CD4-positive, alpha-beta memory T cell (primary cell): ENCODE measurements at regions of chr20 and their contacts with region 1.

Region 1: GRCh38 chr20:33862709-33863403 is 51.7 kb downstream of the CHMP4B start:
- DNase-seq: peak in 3 of 5 donors; percentile 24 to 39 (median 28)
- H3K4me3 ChIP-seq: no peak overlapping the region
- H3K4me3 Mint-ChIP-seq: peak overlapping the region in 1 of 8 donors; percentile 27
- H3K27ac ChIP-seq: no peak overlapping the region
- H3K27ac Mint-ChIP-seq: no peak overlapping the region
- H3K4me1 ChIP-seq: peaks cover 30% of the 10 kb centered on the region
- H3K4me1 Mint-ChIP-seq: peaks cover 15 to 26% (median 21%) of the 10 kb centered on the region in 4 donors
- H3K27me3 ChIP-seq: no peaks in the 10 kb centered on the region
- H3K27me3 Mint-ChIP-seq: no peaks in the 10 kb centered on the region

Region 2: DNA sequence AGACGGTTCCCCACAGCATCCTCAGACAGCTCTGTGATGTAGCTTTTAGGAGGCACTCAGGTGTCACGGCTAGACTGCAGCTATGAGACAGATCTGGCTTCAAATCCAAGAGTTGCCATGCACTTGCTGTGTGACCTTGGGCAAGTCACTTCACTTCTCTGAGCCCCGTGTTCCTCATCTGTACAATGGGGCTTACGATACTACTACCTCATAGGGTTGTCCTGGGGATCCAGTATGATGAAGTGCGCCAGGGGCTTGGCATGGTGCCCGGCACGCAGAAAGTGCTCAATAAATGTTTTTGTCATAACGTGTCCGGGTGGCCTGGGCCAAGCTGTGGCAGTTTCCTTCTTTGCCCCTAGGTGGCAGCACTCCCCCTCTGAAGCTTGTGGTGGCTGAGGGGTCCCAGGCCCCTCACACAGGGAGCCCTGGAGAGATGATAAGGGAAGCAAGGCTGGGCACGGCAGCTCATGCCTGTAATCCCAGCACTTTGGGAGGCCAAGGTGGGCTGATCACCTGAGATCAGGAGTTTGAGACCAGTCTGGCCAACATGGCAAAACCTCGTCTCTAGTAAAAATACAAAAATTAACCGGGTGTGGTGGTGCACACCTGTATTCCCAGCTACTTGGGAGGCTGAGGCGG is 70.8 kb before region 1 on chr20:
- CTCF ChIA-PET with region 1: interaction called, 13 read pairs
- POLR2A ChIA-PET with region 1: no interaction called
- intact Hi-C with region 1: no loop called
- DNase-seq: peak; percentile 20 to 48 (median 32)
- H3K4me3 ChIP-seq: no peak overlapping the region
- H3K4me3 Mint-ChIP-seq: no peak overlapping the region
- H3K27ac ChIP-seq: no peak overlapping the region
- H3K27ac Mint-ChIP-seq: no peak overlapping the region
- H3K4me1 ChIP-seq: peaks cover 9% of the 10 kb centered on the region
- H3K4me1 Mint-ChIP-seq: peaks cover 6 to 14% (median 10%) of the 10 kb centered on the region in 4 donors
- H3K27me3 ChIP-seq: no peaks in the 10 kb centered on the region
- H3K27me3 Mint-ChIP-seq: no peaks in the 10 kb centered on the region

Region 3: GRCh38 chr20:33839566-33839965 is 23.3 kb before region 1 on chr20:
- CTCF ChIA-PET with region 1: interaction called, 4 read pairs
- POLR2A ChIA-PET with region 1: interaction called, 10 read pairs
- intact Hi-C with region 1: no loop called
- DNase-seq: no peak
- H3K4me3 ChIP-seq: no peak overlapping the region
- H3K4me3 Mint-ChIP-seq: no peak overlapping the region
- H3K27ac ChIP-seq: no peak overlapping the region
- H3K27ac Mint-ChIP-seq: peak overlapping the region in 1 of 7 donors; percentile 71
- H3K4me1 ChIP-seq: peaks cover 91% of the 10 kb centered on the region
- H3K4me1 Mint-ChIP-seq: peaks cover 72 to 95% (median 86%) of the 10 kb centered on the region in 4 donors
- H3K27me3 ChIP-seq: no peaks in the 10 kb centered on the region
- H3K27me3 Mint-ChIP-seq: no peaks in the 10 kb centered on the region

Region 4: DNA sequence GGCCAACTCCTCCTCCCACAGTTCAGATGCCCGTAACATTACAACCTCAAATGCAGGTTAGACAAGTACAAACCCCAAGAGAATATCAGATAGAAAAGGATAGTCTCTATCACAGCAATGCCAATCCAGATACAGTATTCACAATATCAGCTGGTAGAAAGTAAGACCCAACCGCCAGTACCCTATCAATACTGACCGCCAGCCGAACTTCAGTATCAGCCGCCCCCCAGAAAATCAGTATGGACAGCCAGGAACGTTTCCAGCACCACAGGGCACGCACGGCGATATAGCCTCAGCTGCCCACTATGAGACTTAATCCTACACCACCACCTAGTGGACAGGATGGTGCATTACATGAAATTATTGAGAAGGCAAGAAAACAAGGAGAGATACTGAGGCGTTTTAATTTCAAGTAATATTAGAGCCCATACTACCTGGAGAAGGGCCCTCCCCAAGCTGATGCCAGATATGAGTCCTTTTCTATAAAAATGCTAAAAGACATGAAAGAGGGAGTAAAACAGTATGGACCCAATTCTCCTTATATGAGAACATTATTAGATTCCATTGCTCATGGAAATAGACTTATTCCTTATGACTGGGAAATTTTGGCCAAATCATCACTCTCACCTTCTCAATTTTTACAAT is 266.8 kb after region 1 on chr20:
- CTCF ChIA-PET with region 1: interaction called, 6 read pairs
- POLR2A ChIA-PET with region 1: no interaction called
- intact Hi-C with region 1: loop called (anchors 1 kb)
- DNase-seq: peak; percentile 65 to 74 (median 71)
- H3K4me3 ChIP-seq: no peak overlapping the region
- H3K4me3 Mint-ChIP-seq: peak overlapping the region in 6 of 8 donors; percentile 3 to 77 (median 36)
- H3K27ac ChIP-seq: no peak overlapping the region
- H3K27ac Mint-ChIP-seq: no peak overlapping the region
- H3K4me1 ChIP-seq: peaks cover 4% of the 10 kb centered on the region
- H3K4me1 Mint-ChIP-seq: peaks cover 4 to 6% (median 4%) of the 10 kb centered on the region in 4 donors
- H3K27me3 ChIP-seq: no peaks in the 10 kb centered on the region
- H3K27me3 Mint-ChIP-seq: peaks cover 4 to 6% of the 10 kb centered on the region in 2 donors